PC-9 (cell line): ENCODE measurements at regions of chr4 and their contacts with region 1.

Region 1: DNA sequence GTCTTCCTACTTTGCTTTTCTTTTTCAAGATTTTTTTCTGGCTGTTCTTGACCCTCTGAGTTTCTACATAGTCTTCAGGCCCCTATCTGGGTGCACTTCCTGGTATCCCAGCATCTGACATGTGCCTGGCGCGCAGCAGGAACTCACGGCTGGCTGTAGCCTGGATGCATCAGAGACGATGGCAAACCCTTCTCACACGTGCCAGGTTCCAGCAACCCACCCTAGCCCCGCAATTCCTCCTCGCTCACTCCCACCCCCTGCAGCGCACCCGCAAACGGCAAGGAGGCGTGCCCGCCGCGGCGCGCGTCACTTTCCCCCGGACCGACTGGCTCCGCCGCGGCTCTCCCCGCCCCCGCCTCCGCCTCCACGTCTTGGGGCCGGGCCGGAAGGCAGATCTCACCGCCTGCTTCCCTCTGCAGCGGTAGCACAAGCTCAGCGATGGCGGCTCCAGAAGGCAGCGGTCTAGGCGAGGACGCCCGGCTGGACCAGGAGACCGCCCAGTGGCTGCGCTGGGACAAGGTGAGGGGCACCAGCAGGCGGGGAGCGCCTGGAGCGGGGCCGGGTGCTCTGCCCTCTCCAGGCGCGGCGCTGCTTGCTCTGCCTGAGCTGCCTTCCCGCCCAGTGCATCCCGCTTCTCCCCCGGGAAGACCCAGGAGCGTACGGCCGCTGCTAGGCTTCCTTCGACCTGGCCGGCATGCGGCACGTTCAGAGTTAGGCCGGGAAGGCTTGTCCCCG is at the start of gene PGM2:
- DNase-seq: peak; percentile 64 to 83
- H3K4me3 ChIP-seq: peak within 1 kb of the TSS; percentile 91
- H3K27ac ChIP-seq: peak within 1 kb of the TSS; percentile 54
- H3K4me1 ChIP-seq: peaks cover 20% of the 10 kb centered on the region
- H3K27me3 ChIP-seq: no peaks in the 10 kb centered on the region
- CTCF ChIP-seq: no peak
- total RNA-seq, gene PGM2: 27.3 and 32.5 TPM in 2 replicates

Region 2: DNA sequence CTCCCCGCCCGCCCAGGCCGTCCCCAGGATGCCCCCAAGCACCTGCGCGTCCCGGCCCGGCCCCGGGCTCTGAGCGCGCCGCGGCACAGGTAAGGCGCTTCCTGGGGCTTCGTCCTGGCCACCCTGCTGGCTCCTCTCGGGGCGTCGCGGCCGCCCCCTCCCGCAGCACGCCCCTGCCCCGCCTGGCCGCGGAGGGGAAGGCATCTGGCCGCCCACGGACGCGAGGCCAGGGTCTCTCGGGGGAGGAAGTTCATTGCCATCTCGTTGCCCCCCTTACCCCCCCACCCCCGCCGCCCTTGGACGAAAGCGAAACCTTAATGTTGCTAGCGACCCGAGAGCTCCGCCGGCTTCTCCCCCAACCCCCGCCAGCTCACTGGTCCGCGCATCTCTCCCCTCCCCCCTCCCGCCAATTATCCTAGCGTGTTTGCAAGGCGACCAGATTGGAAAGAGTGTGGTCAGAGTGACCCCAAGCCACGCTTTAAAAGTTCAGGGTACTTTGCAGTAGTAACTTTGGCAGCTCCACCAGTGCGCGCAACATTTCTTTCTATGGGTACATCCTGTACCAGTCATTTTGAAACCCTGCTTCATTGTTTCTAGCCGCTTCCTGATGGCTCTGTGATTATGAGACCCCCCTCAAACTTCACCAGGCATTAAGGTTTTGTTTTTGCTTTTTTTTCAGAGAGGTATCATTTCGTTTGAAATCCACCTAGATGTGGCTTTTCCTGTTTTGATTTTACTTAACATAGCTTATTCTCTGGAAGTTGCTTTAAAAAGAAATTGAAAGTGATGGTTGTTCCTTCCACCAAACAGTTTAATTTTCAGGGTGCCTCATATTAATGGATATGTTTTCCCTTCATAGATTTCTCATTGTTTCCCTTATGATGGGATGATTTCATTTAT is 65.0 kb after region 1 on chr4:
- CTCF ChIA-PET with region 1: interaction called, 5 read pairs
- POLR2A ChIA-PET with region 1: interaction called, 7 read pairs
- intact Hi-C with region 1: loop called (anchors 5 kb)
- DNase-seq: peak in 1 of 2 experiments; percentile 49
- H3K4me3 ChIP-seq: peak overlapping the region; percentile 64
- H3K27ac ChIP-seq: no peak overlapping the region
- H3K4me1 ChIP-seq: no peaks in the 10 kb centered on the region; the same call in 1 of the 2 replicates
- H3K27me3 ChIP-seq: no peaks in the 10 kb centered on the region
- CTCF ChIP-seq: no peak